SK-N-SH (cell line): ENCODE measurements at regions of chr3 and their contacts with region 1.

Region 1: DNA sequence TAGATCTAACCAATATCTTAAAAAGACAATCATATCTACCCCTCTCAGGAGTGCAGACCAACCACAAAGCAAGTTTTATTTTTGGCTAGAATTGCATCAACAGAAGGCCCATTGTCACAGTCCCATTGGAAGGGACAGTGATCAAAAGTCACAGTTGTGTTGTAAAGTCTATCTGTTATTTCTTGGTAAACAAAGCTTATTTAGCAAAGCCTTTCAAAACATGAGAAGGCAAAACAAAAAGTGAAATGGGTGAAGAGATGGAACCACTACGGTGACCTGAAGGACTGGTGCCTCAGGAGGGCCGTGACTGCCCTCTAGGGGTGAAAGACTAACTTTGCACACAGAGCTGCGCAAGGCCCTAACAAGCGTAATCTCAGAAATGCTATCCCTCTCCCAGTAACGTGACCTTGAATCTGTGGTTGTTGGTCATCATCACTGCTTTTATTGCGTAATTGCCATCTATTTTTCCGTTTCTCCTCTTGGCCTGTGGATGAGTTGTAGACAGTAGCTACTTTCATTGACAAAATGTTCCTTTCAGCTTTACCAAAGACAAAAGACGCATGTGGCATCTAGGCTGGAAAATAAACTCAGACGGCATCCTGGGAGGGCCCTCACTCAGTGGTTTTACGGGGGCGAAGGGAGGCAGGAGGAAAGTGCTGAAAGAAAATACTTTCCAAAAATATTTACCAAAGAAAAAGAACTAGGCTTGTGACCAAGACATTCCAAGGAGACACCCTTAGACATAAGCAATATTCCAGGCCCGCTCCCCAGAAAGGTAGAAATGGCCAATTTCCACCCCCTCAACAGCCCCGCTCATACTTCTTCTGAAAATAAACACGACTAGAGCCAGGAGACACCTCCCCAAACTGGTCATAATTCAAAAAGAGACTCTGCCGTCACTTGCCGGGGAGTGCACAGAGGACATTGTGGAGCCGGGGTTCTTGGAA is 79.4 kb downstream of the FRMD4B start:
- DNase-seq: peak; percentile 63
- H3K4me3 ChIP-seq: peak overlapping the region in 1 of 2 experiments; percentile 28; a peak in 1 of 4 replicates
- H3K27ac ChIP-seq: no peak overlapping the region
- H3K4me1 ChIP-seq: no peaks in the 10 kb centered on the region
- H3K27me3 ChIP-seq: no peaks in the 10 kb centered on the region
- CTCF ChIP-seq: peak; percentile 93
- EP300 ChIP-seq: no peak
- RAD21 ChIP-seq: peak; percentile 98

Region 2: DNA sequence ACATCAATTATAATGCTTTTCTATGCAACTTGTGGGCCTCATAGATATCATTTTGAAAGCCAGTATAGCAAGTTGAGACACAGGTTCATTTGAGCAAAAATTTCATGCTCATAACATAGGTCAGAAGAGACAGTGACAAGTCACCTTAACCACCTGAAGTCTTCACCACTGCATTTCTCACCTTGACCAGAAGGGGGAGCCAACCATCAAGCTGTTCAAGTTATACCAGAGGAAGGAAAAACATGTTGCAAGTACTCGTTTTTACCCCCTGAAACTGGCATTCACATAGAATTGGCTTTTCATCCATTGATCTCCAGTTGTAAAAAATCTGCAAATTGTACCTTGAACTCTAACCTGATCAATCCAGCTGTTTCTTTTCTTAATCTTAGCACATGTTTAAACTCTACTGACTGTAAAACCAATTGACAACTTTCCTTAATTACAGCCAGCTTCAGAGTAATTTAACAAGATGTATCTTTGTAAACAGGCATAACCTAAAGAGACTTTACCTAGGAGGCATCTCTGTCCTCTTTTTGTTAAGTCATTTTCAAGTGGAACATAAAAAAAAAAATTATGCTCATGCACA is 185.5 kb before region 1 on chr3:
- CTCF ChIA-PET with region 1: interaction called, 56 read pairs
- POLR2A ChIA-PET with region 1: no interaction called
- DNase-seq: peak; percentile 37
- H3K4me3 ChIP-seq: no peak overlapping the region; a peak in 1 of 4 replicates
- H3K27ac ChIP-seq: no peak overlapping the region
- H3K4me1 ChIP-seq: no peaks in the 10 kb centered on the region
- H3K27me3 ChIP-seq: no peaks in the 10 kb centered on the region
- CTCF ChIP-seq: peak; percentile 97
- EP300 ChIP-seq: no peak
- RAD21 ChIP-seq: peak; percentile 86

Region 3: GRCh38 chr3:69181592-69182211 is 124.8 kb before region 1 on chr3:
- CTCF ChIA-PET with region 1: interaction called, 20 read pairs
- POLR2A ChIA-PET with region 1: no interaction called
- DNase-seq: no peak
- H3K4me3 ChIP-seq: peak overlapping the region in 1 of 2 experiments; percentile 43; a peak in 1 of 4 replicates
- H3K27ac ChIP-seq: peak overlapping the region in 1 of 2 experiments; percentile 88; a peak in 2 of 4 replicates
- H3K4me1 ChIP-seq: peaks cover 0 to 17% of the 10 kb centered on the region in 2 experiments; a peak in 1 of 4 replicates
- H3K27me3 ChIP-seq: no peaks in the 10 kb centered on the region
- CTCF ChIP-seq: no peak
- EP300 ChIP-seq: no peak
- RAD21 ChIP-seq: no peak

Region 4: GRCh38 chr3:69288161-69288895 is 18.2 kb before region 1 on chr3:
- CTCF ChIA-PET with region 1: interaction called, 15 read pairs
- POLR2A ChIA-PET with region 1: no interaction called
- DNase-seq: no peak
- H3K4me3 ChIP-seq: no peak overlapping the region
- H3K27ac ChIP-seq: peak overlapping the region in 1 of 2 experiments; percentile 58; a peak in 2 of 4 replicates
- H3K4me1 ChIP-seq: peaks cover 7 to 9% of the 10 kb centered on the region in 2 experiments; a peak in 3 of 4 replicates
- H3K27me3 ChIP-seq: no peaks in the 10 kb centered on the region
- CTCF ChIP-seq: no peak
- EP300 ChIP-seq: no peak
- RAD21 ChIP-seq: no peak

Region 5: GRCh38 chr3:69320871-69321271 is 14.4 kb after region 1 on chr3:
- CTCF ChIA-PET with region 1: interaction called, 25 read pairs
- POLR2A ChIA-PET with region 1: no interaction called
- DNase-seq: no peak
- H3K4me3 ChIP-seq: no peak overlapping the region
- H3K27ac ChIP-seq: no peak overlapping the region
- H3K4me1 ChIP-seq: no peaks in the 10 kb centered on the region; a peak in 1 of 4 replicates
- H3K27me3 ChIP-seq: no peaks in the 10 kb centered on the region
- CTCF ChIP-seq: no peak
- EP300 ChIP-seq: no peak
- RAD21 ChIP-seq: no peak

Region 6: DNA sequence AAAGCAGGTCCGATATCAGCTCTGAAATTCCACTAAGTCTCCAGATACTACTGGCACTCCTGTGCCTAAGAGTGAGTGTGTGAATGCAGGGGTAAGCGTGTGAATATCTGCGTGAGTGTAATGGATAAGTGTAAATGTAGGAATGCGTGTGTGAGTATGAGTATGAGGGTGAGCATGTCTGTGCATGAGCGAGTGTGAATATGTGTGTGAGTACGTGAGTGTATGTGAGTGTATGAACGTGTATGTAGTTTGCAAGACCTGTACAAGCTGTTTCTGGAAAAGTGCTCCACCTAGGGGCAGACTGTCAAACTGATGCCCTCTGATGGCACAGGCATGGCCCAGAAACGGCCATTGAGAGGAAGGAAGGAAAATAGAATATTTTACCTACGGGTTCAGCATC is 103.7 kb after region 1 on chr3:
- CTCF ChIA-PET with region 1: interaction called, 76 read pairs
- POLR2A ChIA-PET with region 1: no interaction called
- DNase-seq: peak; percentile 54
- H3K4me3 ChIP-seq: no peak overlapping the region
- H3K27ac ChIP-seq: peak overlapping the region in 1 of 2 experiments; percentile 8; a peak in 1 of 4 replicates
- H3K4me1 ChIP-seq: peaks cover 2 to 8% of the 10 kb centered on the region in 2 experiments; a peak in 3 of 4 replicates
- H3K27me3 ChIP-seq: no peaks in the 10 kb centered on the region
- CTCF ChIP-seq: peak; percentile 82
- EP300 ChIP-seq: no peak
- RAD21 ChIP-seq: peak; percentile 79

Region 7: GRCh38 chr3:69439643-69440270 is 133.2 kb after region 1 on chr3:
- CTCF ChIA-PET with region 1: interaction called, 10 read pairs
- POLR2A ChIA-PET with region 1: no interaction called
- DNase-seq: no peak
- H3K4me3 ChIP-seq: no peak overlapping the region; a peak in 1 of 4 replicates
- H3K27ac ChIP-seq: no peak overlapping the region
- H3K4me1 ChIP-seq: no peaks in the 10 kb centered on the region
- H3K27me3 ChIP-seq: no peaks in the 10 kb centered on the region
- CTCF ChIP-seq: peak; percentile 77
- EP300 ChIP-seq: no peak
- RAD21 ChIP-seq: peak; percentile 50